Tibial artery (tissue), 4 donors: ENCODE measurements at regions of chr7 and their contacts with region 1.

Region 1: GRCh38 chr7:100126931-100127865 is at the start of gene MBLAC1:
- DNase-seq: peak; percentile 86 to 93
- H3K4me3 ChIP-seq: peak within 1 kb of the TSS; percentile 68 to 88
- H3K27ac ChIP-seq: peak within 1 kb of the TSS; percentile 82 to 87
- H3K4me1 ChIP-seq: peaks cover 0 to 34% (median 15%) of the 10 kb centered on the region in 4 donors
- H3K27me3 ChIP-seq: no peaks in the 10 kb centered on the region
- CTCF ChIP-seq: peak in 1 of 2 experiments; percentile 2

Region 2: GRCh38 chr7:100101016-100101862 is 26.0 kb before region 1 on chr7 and contains the starts of genes AP4M1 and MCM7:
- intact Hi-C with region 1: loop called (anchors 2 kb)
- DNase-seq: peak; percentile 98 to 100
- H3K4me3 ChIP-seq: peak within 1 kb of the TSS; percentile 92 to 98
- H3K27ac ChIP-seq: peak within 1 kb of the TSS; percentile 91 to 99
- H3K4me1 ChIP-seq: peaks cover 0 to 24% (median 18%) of the 10 kb centered on the region in 4 donors
- H3K27me3 ChIP-seq: no peaks in the 10 kb centered on the region
- CTCF ChIP-seq: no peak